OCI-LY7 (cell line): ENCODE measurements at regions of chr17 and their contacts with region 1.

Region 1: GRCh38 chr17:40219073-40219860 is at the start of gene WIPF2:
- DNase-seq: peak; percentile 97
- H3K4me3 ChIP-seq: peak within 1 kb of the TSS; percentile 81
- H3K27ac ChIP-seq: peak within 1 kb of the TSS; percentile 57
- H3K4me1 ChIP-seq: peaks cover 16% of the 10 kb centered on the region
- CTCF ChIP-seq: peak; percentile 58
- total RNA-seq, gene WIPF2: 4.6 and 4.7 TPM in 2 replicates

Region 2: DNA sequence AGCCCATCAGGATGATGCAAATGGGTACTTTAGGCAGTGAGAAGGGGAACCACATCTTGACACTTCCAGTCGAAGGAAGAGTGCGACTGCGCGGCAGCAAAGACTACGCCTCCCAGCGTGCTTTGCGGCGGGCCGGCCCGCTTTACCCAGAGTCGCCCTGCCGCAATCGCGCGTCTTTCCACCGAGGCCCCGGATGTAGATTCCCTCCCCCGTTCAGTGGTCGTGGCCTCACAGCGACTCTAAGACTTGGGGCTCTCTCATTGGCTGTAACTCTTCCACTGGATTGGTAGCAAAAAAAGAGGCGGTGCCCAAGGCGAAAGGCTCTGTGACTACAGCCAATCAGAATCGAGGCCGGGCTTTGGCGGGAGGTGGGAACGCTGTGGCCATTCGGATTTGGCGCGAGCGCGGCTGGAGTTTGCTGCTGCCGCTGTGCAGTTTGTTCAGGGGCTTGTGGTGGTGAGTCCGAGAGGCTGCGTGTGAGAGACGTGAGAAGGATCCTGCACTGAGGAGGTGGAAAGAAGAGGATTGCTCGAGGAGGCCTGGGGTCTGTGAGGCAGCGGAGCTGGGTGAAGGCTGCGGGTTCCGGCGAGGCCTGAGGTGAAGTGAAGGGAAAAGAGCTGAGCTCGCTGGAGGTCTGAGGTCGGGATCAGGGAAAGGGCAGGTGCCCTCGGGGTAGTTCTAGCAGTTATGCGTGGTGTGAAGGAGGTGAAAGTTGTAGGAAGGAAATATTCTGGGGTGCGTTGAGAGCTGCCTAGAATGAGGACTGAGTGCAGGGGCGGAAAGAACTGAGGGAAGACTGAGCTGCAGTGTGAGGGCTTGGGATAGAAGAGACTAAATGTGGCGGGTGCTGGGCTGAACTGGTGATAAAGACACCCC is 68.5 kb after region 1 on chr17 and contains the start of gene CDC6:
- CTCF ChIA-PET with region 1: interaction called, 4 read pairs
- POLR2A ChIA-PET with region 1: interaction called, 3 read pairs
- intact Hi-C with region 1: loop called (anchors 5 kb)
- DNase-seq: peak; percentile 100
- H3K4me3 ChIP-seq: peak within 1 kb of the TSS; percentile 97
- H3K27ac ChIP-seq: peak within 1 kb of the TSS; percentile 89
- H3K4me1 ChIP-seq: peaks cover 31% of the 10 kb centered on the region
- CTCF ChIP-seq: no peak
- total RNA-seq, gene CDC6: 72.3 and 75.2 TPM in 2 replicates